Activated T-helper 2 cell treated with anti-CD3 and anti-CD28 coated beads, Interferon-gamma antibody, Interleukin-2, Interleukin-4, amounts not matched to agents 10 μg/mL and 5 μg/mL and 100 μg/mL, durations not matched to agents 14 hours and 24 hours and 36 hours (primary cell): ENCODE measurements at regions of chr6 and their contacts with region 1.

Region 1: DNA sequence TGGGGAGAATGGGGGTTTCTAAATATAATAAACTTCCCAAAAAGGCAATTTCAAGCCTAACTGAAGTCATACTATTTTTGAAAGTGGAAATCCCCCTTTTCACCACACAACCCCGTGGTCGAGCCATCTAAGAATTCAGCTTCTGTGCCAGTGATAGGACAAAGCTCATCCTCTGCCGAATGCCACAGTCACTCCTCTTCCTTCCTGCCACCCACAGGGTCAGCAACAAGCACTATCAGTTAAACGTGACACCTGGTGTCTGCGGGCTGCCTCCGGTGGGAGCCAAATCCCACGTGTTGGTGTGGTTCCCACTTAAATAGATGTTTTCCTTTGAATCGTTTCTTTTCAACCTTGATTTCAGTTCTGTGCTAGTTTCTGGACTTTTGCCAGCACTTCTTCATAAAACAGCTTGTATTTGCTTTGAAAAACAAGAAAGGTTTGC is 60.7 kb downstream of the TNFAIP3 start:
- DNase-seq: peak; percentile 74
- H3K4me3 Mint-ChIP-seq: peak overlapping the region; percentile 59
- H3K27ac Mint-ChIP-seq: peak overlapping the region; percentile 97
- H3K4me1 Mint-ChIP-seq: peaks cover 70% of the 10 kb centered on the region
- H3K27me3 Mint-ChIP-seq: no peaks in the 10 kb centered on the region

Region 2: GRCh38 chr6:137657351-137658011 is 270.3 kb before region 1 on chr6:
- intact Hi-C with region 1: loop called (anchors 1 kb)
- DNase-seq: peak; percentile 34
- H3K4me3 Mint-ChIP-seq: no peak overlapping the region
- H3K27ac Mint-ChIP-seq: peak overlapping the region; percentile 65
- H3K4me1 Mint-ChIP-seq: peaks cover 32% of the 10 kb centered on the region
- H3K27me3 Mint-ChIP-seq: no peaks in the 10 kb centered on the region

Region 3: GRCh38 chr6:137873273-137873762 is 54.5 kb before region 1 on chr6:
- intact Hi-C with region 1: loop called (anchors 1 kb)
- DNase-seq: peak; percentile 44
- H3K4me3 Mint-ChIP-seq: peak overlapping the region; percentile 96
- H3K27ac Mint-ChIP-seq: peak overlapping the region; percentile 96
- H3K4me1 Mint-ChIP-seq: peaks cover 52% of the 10 kb centered on the region
- H3K27me3 Mint-ChIP-seq: no peaks in the 10 kb centered on the region

Region 4: GRCh38 chr6:137909533-137909932 is 18.3 kb before region 1 on chr6:
- intact Hi-C with region 1: loop called (anchors 1 kb)
- DNase-seq: no peak
- H3K4me3 Mint-ChIP-seq: peak overlapping the region; percentile 40
- H3K27ac Mint-ChIP-seq: peak overlapping the region; percentile 83
- H3K4me1 Mint-ChIP-seq: peaks cover 68% of the 10 kb centered on the region
- H3K27me3 Mint-ChIP-seq: no peaks in the 10 kb centered on the region